GM18951 (cell line): ENCODE measurements at regions of chrX and their contacts with region 1.

Region 1: GRCh38 chrX:49878834-49879659 is at the start of gene USP27X:
- POLR2A ChIP-seq: peak; percentile 49

Region 2: GRCh38 chrX:49829016-49829415 is 50.0 kb before region 1 on chrX and contains the start of gene PAGE4:
- in situ Hi-C with region 1: no loop called
- POLR2A ChIP-seq: no peak

Region 3: GRCh38 chrX:50180073-50180940 is 301.3 kb after region 1 on chrX:
- in situ Hi-C with region 1: no loop called
- POLR2A ChIP-seq: no peak

Region 4: GRCh38 chrX:50393902-50394301 is 514.9 kb after region 1 on chrX:
- in situ Hi-C with region 1: no loop called
- POLR2A ChIP-seq: no peak

Region 5: GRCh38 chrX:50579955-50580354 is 700.9 kb after region 1 on chrX:
- in situ Hi-C with region 1: loop called (anchors 25 kb)
- POLR2A ChIP-seq: no peak